Gastrocnemius medialis (tissue), 4 donors: ENCODE measurements at regions of chr17 and their contacts with region 1.

Region 1: GRCh38 chr17:7351665-7352501 is at the start of gene KCTD11:
- DNase-seq: peak; percentile 84 to 91
- ATAC-seq: peak; percentile 70 to 81
- H3K4me3 ChIP-seq: peak within 1 kb of the TSS; percentile 71 to 100 (median 84)
- H3K27ac ChIP-seq: peak within 1 kb of the TSS; percentile 93 to 98 (median 96)
- H3K4me1 ChIP-seq: peaks cover 22 to 40% of the 10 kb centered on the region in 2 donors
- H3K27me3 ChIP-seq: no peaks in the 10 kb centered on the region
- CTCF ChIP-seq: peak in 3 of 5 experiments; percentile 58 to 74 (median 60)
- POLR2A ChIP-seq: peak; percentile 72 to 75
- total RNA-seq, gene KCTD11: 3.6 to 7.0 (median 4.6) TPM

Region 2: DNA sequence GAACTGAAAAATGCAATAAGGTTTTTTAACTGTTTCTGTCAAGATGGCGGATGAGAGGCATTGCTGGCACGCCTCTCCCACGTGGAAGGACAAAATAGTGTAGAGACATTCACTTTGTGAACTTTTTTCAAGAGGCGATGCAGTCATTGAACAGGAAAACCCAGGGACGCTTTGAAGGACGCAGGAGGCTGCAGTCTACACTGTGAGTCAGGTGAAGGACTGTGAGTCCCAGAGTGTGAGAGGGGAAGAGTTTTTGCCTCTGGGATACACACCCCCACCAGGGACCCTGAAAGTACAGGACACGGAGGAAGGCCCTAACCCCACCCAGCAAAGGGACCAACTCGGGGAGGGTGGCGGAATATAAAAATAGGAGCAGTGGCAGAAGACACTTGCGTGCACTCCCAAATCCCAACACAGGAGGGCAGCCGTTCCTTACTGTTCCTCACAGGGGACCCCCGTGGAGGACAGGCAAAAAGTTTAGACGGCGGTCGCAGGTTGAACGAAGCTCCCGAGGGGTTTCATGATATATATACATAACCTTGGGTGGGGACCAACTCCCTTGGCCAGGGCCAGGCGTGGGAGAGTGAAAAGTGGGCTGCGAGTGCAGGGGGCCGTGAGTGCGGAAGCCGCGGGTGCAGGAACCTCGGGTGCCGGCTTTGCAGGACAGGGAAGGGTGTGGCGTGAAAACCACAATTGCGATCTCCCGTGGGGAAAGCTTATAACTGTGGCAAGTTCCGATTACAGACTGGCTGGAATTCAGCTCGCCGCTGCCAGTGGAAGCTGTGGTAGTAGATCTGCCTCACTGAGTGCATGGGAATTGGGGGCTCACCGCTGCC is 438.1 kb before region 1 on chr17:
- in situ Hi-C with region 1: no loop called
- intact Hi-C with region 1: no loop called
- DNase-seq: peak; percentile 31 to 62
- ATAC-seq: peak; percentile 42 to 74
- H3K4me3 ChIP-seq: peak overlapping the region; percentile 17 to 48 (median 39)
- H3K27ac ChIP-seq: no peak overlapping the region
- H3K4me1 ChIP-seq: peaks cover 0 to 6% of the 10 kb centered on the region in 2 donors
- H3K27me3 ChIP-seq: no peaks in the 10 kb centered on the region
- CTCF ChIP-seq: peak; percentile 64 to 87 (median 84)
- POLR2A ChIP-seq: no peak

Region 3: GRCh38 chr17:7045909-7046724 is 305.8 kb before region 1 on chr17:
- in situ Hi-C with region 1: loop called in 1 of 4 experiments (anchors 25 kb)
- intact Hi-C with region 1: loop called (anchors 10 kb)
- DNase-seq: no peak
- ATAC-seq: peak; percentile 35 to 57
- H3K4me3 ChIP-seq: peak overlapping the region; percentile 14 to 50 (median 30)
- H3K27ac ChIP-seq: peak overlapping the region in 1 of 4 donors; percentile 44
- H3K4me1 ChIP-seq: peaks cover 10 to 12% of the 10 kb centered on the region in 2 donors
- H3K27me3 ChIP-seq: peaks cover 21 to 30% (median 29%) of the 10 kb centered on the region in 3 donors
- CTCF ChIP-seq: peak; percentile 50 to 76 (median 74)
- POLR2A ChIP-seq: no peak

Region 4: DNA sequence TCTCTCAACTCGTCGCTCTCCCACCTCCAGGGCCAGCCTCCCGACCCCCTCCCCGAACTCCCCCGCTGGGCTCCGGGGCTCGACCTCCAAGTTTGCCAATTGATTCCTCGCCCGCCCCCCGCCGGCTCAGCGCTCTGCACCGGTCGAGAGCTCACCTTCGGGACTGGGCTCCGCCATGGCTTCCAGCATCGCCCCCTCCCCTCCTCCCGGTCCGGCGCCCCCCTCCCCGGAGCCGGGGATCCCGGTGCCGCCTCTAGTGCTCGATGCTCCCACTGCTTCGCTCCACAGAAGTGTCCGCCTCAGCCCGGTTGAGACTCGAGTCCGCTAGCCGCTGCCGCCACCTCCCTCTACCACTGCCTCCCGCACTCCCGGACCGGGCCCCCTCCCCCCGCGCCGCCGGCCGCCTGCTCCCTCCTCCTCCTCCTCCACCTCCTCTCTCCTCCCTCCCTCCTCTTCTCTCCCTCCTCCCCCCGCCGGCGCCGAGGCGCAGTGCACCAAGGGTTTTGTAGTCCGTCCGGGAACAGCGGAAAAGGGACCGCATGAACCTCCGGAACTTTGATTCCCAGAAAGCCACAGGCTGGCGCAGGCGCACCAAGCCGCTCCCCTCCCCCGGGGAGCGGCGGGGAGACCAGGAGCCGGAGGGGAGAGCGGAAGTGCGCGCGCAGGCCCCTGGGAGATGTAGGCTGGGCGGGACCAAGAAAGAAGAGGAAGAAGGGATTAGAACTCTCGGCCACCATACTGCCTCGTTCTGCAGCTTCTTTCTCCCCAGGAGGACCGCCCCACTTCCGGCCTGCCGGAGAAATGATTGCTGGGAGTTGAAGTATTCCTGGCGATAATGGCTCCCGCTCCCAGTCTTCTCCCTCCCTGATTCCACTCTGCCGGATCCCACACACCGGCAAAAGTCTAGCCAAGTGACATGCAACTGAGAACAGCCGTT is 112.5 kb before region 1 on chr17 and contains the start of gene PHF23:
- in situ Hi-C with region 1: no loop called
- intact Hi-C with region 1: no loop called
- DNase-seq: peak; percentile 100
- ATAC-seq: peak; percentile 67 to 75
- H3K4me3 ChIP-seq: peak within 1 kb of the TSS; percentile 78 to 100 (median 98)
- H3K27ac ChIP-seq: peak within 1 kb of the TSS; percentile 92 to 99 (median 98)
- H3K4me1 ChIP-seq: peaks cover 34 to 41% of the 10 kb centered on the region in 2 donors
- H3K27me3 ChIP-seq: no peaks in the 10 kb centered on the region
- CTCF ChIP-seq: peak in 2 of 5 experiments; percentile 24 to 59
- POLR2A ChIP-seq: peak; percentile 92 to 93
- total RNA-seq, gene PHF23: 16.9 to 31.8 (median 24.1) TPM

Region 5: GRCh38 chr17:7329374-7329996 is 22.4 kb before region 1 on chr17:
- in situ Hi-C with region 1: no loop called
- intact Hi-C with region 1: loop called (anchors 1 kb)
- DNase-seq: peak; percentile 97 to 99
- ATAC-seq: peak; percentile 87 to 88
- H3K4me3 ChIP-seq: peak overlapping the region; percentile 78 to 99 (median 93)
- H3K27ac ChIP-seq: peak overlapping the region; percentile 94 to 99 (median 96)
- H3K4me1 ChIP-seq: peaks cover 15 to 24% of the 10 kb centered on the region in 2 donors
- H3K27me3 ChIP-seq: peaks cover 0 to 3% (median 2%) of the 10 kb centered on the region in 3 donors
- CTCF ChIP-seq: no peak
- POLR2A ChIP-seq: peak; percentile 87 to 92

Region 6: GRCh38 chr17:7340179-7340578 is 11.7 kb before region 1 on chr17:
- in situ Hi-C with region 1: no loop called
- intact Hi-C with region 1: no loop called
- DNase-seq: no peak
- ATAC-seq: peak; percentile 67 to 91
- H3K4me3 ChIP-seq: no peak overlapping the region
- H3K27ac ChIP-seq: no peak overlapping the region
- H3K4me1 ChIP-seq: peaks cover 0 to 6% of the 10 kb centered on the region in 2 donors
- H3K27me3 ChIP-seq: peaks cover 22 to 49% (median 32%) of the 10 kb centered on the region in 3 donors
- CTCF ChIP-seq: no peak
- POLR2A ChIP-seq: no peak

Region 7: DNA sequence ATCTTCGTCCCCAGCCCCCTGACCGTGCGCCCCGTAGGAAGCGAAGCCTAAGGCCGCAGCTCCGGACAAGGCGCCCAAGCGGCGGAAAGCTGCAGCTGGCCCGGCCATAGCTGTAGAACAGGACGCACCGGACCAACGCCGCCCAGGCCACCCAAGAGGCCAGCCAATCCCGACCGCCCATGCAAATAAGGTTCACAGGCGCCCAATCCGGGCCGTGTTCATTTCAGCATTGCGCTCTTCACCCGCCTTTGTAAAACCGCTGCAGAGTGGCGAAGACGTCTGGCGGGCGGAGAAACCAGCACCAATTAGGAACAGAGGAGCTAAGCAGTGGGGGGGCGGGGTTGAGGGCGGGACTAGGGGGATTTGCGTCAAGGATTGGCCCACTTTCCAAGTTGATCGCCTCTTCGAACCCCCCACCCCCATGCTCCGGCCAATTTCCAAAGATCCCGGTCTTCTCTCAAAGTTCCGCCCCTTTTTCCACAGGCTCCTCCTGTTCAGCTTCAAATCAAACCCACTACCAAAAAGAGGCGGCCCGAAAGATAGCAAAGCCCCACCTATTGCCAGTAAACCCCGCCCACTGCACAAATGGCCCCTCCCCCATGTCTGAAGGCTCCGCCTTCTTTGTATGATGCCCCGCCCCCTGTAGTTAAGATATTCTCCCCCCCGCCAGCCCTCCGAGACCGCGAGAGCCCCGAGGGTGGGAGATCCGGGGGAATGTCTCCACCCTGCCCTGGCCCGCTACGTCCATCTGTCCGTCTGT is 52.3 kb after region 1 on chr17 and contains the start of gene TMEM256:
- in situ Hi-C with region 1: no loop called
- intact Hi-C with region 1: loop called (anchors 2 kb)
- DNase-seq: peak; percentile 100
- ATAC-seq: peak; percentile 90
- H3K4me3 ChIP-seq: peak within 1 kb of the TSS; percentile 62 to 81 (median 70)
- H3K27ac ChIP-seq: peak within 1 kb of the TSS; percentile 92 to 97 (median 92)
- H3K4me1 ChIP-seq: peaks cover 19 to 20% of the 10 kb centered on the region in 2 donors
- H3K27me3 ChIP-seq: no peaks in the 10 kb centered on the region
- CTCF ChIP-seq: peak in 2 of 5 experiments; percentile 13 to 22
- POLR2A ChIP-seq: peak; percentile 94 to 96
- total RNA-seq, gene TMEM256: 28.9 to 65.6 (median 50.2) TPM

Region 8: GRCh38 chr17:7523033-7523432 is 171.2 kb after region 1 on chr17:
- in situ Hi-C with region 1: loop called in 2 of 4 experiments (anchors 25 kb)
- intact Hi-C with region 1: no loop called
- DNase-seq: no peak
- ATAC-seq: no peak
- H3K4me3 ChIP-seq: no peak overlapping the region
- H3K27ac ChIP-seq: no peak overlapping the region
- H3K4me1 ChIP-seq: no peaks in the 10 kb centered on the region
- H3K27me3 ChIP-seq: no peaks in the 10 kb centered on the region
- CTCF ChIP-seq: peak in 2 of 5 experiments; percentile 39 to 47
- POLR2A ChIP-seq: no peak

Region 9: GRCh38 chr17:9021158-9021991 is 1669.5 kb after region 1 on chr17 and contains the start of gene NTN1:
- in situ Hi-C with region 1: no loop called
- intact Hi-C with region 1: no loop called
- DNase-seq: no peak
- ATAC-seq: peak; percentile 43 to 49
- H3K4me3 ChIP-seq: peak within 1 kb of the TSS; percentile 54 to 81 (median 68)
- H3K27ac ChIP-seq: peak within 1 kb of the TSS; percentile 38 to 66 (median 47)
- H3K4me1 ChIP-seq: peaks cover 0 to 9% of the 10 kb centered on the region in 2 donors
- H3K27me3 ChIP-seq: peaks cover 18 to 24% (median 23%) of the 10 kb centered on the region in 3 donors
- CTCF ChIP-seq: no peak
- POLR2A ChIP-seq: no peak
- total RNA-seq, gene NTN1: 0.76 to 4.1 (median 1.2) TPM